Endothelial cell of umbilical vein (primary cell): ENCODE measurements at regions of chr17 and their contacts with region 1.

Region 1: DNA sequence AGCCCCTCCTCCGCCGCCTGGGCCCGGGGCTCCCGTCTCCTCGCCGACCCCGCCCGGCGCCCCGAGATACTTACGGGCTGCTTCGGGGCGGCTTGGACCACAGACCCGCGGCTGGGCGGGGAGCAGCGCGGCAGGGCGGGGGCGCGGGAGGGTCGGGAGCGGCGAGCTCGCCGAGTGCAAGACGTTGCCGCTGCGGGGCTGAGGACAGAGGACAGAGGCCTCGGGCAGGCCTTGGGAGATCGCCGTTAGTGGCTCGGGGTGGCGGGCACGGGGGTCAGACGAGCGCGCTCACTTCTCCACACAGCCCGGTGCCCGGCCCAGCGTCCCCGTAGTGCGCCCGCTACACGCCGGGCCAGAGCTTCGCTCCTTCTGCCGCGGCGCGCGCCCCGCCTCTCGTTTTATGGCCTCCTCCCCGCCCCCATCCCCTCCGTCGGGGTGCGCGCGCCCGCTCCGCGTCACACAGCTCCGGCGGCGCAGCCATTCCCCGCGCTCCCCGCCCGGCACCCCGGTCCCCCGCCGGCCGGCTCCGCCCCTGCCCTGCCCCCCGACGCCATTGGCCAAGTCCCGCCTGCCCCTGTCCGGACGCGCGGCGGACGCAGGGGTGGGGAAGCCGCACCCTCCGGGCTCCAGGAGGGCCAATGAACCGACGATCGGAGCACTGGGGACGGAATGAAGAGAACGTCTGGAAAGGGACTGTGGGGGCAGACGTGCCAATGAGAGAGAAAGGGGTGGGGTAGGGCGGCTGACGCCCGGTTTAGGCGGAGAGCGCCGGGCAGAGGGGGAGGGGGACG is at the start of gene TOB1:
- DNase-seq: peak; percentile 98
- H3K4me3 ChIP-seq: peak within 1 kb of the TSS; percentile 48 to 82 (median 63)
- H3K27ac ChIP-seq: peak within 1 kb of the TSS; percentile 38
- H3K4me1 ChIP-seq: peaks cover 11% of the 10 kb centered on the region
- H3K27me3 ChIP-seq: no peaks in the 10 kb centered on the region
- CTCF ChIP-seq: no peak
- POLR2A ChIP-seq: peak; percentile 99
- total RNA-seq, gene TOB1: 12.9 and 13.0 TPM in 2 replicates

Region 2: DNA sequence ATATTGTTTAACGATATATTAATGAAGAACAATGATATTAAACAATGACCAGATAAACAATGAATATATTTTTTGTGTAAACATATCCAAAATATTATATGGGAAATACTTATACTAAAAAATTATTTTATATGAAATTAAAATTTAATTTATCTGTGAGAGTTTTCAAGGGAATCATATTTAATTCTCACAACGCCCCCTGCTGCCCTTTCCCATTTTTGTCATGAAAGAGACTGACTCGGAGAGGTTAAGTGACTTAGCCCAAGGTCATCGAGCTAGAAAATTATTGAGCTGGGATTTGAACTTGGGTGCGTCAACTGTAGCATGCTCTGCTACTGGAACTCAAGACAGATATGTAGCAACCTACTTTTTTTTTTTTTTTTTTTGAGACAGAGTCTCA is 365.1 kb before region 1 on chr17:
- CTCF ChIA-PET with region 1: no interaction called
- POLR2A ChIA-PET with region 1: interaction called, 11 read pairs
- dilution Hi-C with region 1: no loop called
- intact Hi-C with region 1: no loop called
- DNase-seq: peak; percentile 42
- H3K4me3 ChIP-seq: no peak overlapping the region
- H3K27ac ChIP-seq: no peak overlapping the region
- H3K4me1 ChIP-seq: no peaks in the 10 kb centered on the region
- H3K27me3 ChIP-seq: peaks cover 3 to 6% of the 10 kb centered on the region in 2 experiments
- CTCF ChIP-seq: peak; percentile 28 to 29
- POLR2A ChIP-seq: no peak

Region 3: GRCh38 chr17:50817838-50818237 is 48.3 kb before region 1 on chr17:
- CTCF ChIA-PET with region 1: no interaction called
- POLR2A ChIA-PET with region 1: no interaction called
- dilution Hi-C with region 1: no loop called
- intact Hi-C with region 1: no loop called
- DNase-seq: no peak
- H3K4me3 ChIP-seq: no peak overlapping the region
- H3K27ac ChIP-seq: no peak overlapping the region
- H3K4me1 ChIP-seq: no peaks in the 10 kb centered on the region
- H3K27me3 ChIP-seq: peaks cover 1 to 5% of the 10 kb centered on the region in 2 experiments
- CTCF ChIP-seq: no peak
- POLR2A ChIP-seq: no peak

Region 4: DNA sequence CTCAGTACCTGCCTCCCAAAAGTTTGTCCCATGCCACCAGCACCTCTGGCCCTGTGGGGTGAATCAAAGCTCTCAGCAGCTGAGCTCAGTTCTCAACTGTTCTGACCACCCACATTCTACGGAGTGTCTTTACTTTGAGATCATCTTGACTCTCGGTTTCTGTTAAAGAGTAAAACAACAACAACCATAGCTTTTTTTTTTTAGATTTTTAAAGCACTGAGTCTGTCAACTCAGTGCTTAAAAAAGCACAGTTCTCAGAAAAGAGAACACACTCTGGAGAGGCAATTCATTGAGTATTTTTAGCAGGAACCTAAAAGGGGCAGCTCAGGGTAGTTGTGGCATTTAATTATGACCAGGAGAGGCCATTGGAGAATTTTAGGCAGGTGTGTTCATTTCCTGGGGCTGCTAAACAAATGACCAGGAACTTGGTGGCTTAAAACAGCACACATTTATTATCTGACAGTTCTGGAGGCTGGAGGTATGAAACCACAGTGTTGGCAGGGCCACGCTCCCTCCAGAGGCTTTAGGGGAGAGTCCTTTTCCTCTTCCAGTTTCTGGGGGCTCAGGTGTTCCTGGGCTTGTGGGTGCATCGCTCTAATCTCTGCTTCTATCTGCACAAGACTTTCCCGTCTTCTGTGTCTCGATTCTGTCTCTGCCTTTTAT is 37.5 kb before region 1 on chr17:
- CTCF ChIA-PET with region 1: no interaction called
- POLR2A ChIA-PET with region 1: no interaction called
- dilution Hi-C with region 1: no loop called
- intact Hi-C with region 1: no loop called
- DNase-seq: no peak
- H3K4me3 ChIP-seq: no peak overlapping the region
- H3K27ac ChIP-seq: no peak overlapping the region
- H3K4me1 ChIP-seq: no peaks in the 10 kb centered on the region
- H3K27me3 ChIP-seq: peaks cover 2 to 3% of the 10 kb centered on the region in 2 experiments
- CTCF ChIP-seq: no peak
- POLR2A ChIP-seq: no peak

Region 5: GRCh38 chr17:50853015-50853615 is 13.1 kb before region 1 on chr17:
- CTCF ChIA-PET with region 1: interaction called, 125 read pairs
- POLR2A ChIA-PET with region 1: interaction called, 67 read pairs
- dilution Hi-C with region 1: no loop called
- intact Hi-C with region 1: no loop called
- DNase-seq: peak; percentile 53
- H3K4me3 ChIP-seq: no peak overlapping the region
- H3K27ac ChIP-seq: no peak overlapping the region
- H3K4me1 ChIP-seq: peaks cover 10% of the 10 kb centered on the region
- H3K27me3 ChIP-seq: peaks cover 7 to 16% of the 10 kb centered on the region in 2 experiments
- CTCF ChIP-seq: no peak
- POLR2A ChIP-seq: no peak

Region 6: DNA sequence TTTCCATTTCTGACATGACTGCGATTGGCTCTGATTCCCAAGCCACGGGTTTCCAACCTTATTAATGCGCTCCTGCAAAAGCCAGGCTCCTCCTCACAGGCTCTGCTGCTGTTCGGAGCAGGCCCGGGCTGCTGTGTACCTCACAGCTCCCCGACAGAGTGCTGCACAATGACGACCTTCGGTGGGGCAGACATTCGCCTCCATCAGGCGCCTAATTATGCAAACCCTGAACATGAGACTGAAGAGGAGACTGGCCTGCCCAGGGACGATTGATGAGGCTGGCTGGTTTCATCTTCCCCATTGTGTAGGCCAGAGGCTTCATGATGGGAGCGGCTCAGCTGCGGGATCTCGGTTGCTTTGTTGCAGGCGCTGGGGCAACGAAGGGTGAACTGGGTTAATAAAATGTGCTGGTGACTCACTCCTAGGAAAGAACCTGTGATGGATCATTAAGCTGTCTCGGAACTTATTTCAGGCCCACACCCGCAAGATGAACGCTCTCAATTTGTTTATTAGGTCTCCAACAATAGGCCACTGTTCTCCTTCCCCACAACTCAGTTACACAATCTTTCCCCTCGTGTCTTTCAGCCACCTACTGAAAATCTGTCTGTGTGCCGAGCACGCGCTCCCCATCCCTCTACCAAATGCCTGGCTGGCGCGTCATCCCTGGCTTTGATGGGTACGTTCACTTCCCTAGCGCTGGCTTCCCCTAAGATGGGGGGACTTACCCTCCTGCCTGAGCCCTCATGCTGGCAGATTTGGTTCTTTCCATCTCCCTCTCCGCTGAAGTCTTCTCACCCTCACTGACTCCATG is 27.2 kb after region 1 on chr17:
- CTCF ChIA-PET with region 1: no interaction called
- POLR2A ChIA-PET with region 1: no interaction called
- dilution Hi-C with region 1: no loop called
- intact Hi-C with region 1: no loop called
- DNase-seq: no peak
- H3K4me3 ChIP-seq: no peak overlapping the region
- H3K27ac ChIP-seq: no peak overlapping the region
- H3K4me1 ChIP-seq: no peaks in the 10 kb centered on the region
- H3K27me3 ChIP-seq: peaks cover 5 to 12% of the 10 kb centered on the region in 2 experiments
- CTCF ChIP-seq: no peak
- POLR2A ChIP-seq: no peak

Region 7: GRCh38 chr17:50931144-50931908 is 65.1 kb after region 1 on chr17:
- CTCF ChIA-PET with region 1: interaction called, 3 read pairs
- POLR2A ChIA-PET with region 1: interaction called, 25 read pairs
- dilution Hi-C with region 1: no loop called
- intact Hi-C with region 1: loop called (anchors 1 kb)
- DNase-seq: peak; percentile 82
- H3K4me3 ChIP-seq: peak overlapping the region; percentile 37 to 67 (median 61)
- H3K27ac ChIP-seq: peak overlapping the region; percentile 66
- H3K4me1 ChIP-seq: peaks cover 11% of the 10 kb centered on the region
- H3K27me3 ChIP-seq: no peaks in the 10 kb centered on the region
- CTCF ChIP-seq: no peak
- POLR2A ChIP-seq: no peak

Region 8: DNA sequence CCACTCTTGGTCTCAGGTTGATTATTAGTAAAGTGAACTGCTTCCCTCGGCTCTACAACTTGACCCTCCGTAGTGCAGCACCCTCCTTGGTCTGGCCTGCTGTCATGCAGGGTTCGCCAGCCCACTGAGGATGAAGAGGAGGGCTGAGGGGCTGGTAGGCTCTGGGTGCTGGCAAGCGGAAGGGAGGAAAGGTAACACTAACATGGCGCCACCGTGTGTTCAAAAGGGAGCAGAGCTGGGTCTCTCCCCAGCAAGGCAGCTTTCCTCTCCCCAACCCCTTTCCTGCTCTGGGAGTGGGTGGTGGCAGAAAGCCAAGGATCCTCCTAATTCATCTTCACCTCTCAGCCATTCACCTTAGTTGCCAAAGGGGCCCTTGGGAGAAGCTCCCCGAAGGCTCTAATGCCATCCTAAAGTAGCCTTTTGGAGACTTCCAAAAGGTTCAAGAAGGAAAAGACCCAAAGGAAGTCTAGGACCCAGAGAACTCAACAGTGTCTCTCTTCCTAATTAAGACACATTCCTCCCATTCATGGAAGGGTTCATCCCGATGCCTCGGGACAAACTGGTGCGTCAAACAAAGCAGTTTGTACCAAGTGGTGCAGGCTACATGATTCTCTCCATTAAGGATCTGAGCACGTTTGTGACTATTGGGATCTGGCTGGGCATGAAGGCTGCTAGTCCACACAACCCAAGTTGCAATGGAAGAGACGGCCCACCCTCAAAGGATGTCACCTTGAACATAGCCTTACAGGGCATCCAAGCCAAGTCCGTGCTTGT is 90.8 kb after region 1 on chr17:
- CTCF ChIA-PET with region 1: interaction called, 149 read pairs
- POLR2A ChIA-PET with region 1: interaction called, 18 read pairs
- dilution Hi-C with region 1: no loop called
- intact Hi-C with region 1: loop called (anchors 1 kb)
- DNase-seq: peak; percentile 44
- H3K4me3 ChIP-seq: no peak overlapping the region
- H3K27ac ChIP-seq: no peak overlapping the region
- H3K4me1 ChIP-seq: peaks cover 7% of the 10 kb centered on the region
- H3K27me3 ChIP-seq: no peaks in the 10 kb centered on the region
- CTCF ChIP-seq: peak; percentile 76 to 87
- POLR2A ChIP-seq: no peak

Region 9: DNA sequence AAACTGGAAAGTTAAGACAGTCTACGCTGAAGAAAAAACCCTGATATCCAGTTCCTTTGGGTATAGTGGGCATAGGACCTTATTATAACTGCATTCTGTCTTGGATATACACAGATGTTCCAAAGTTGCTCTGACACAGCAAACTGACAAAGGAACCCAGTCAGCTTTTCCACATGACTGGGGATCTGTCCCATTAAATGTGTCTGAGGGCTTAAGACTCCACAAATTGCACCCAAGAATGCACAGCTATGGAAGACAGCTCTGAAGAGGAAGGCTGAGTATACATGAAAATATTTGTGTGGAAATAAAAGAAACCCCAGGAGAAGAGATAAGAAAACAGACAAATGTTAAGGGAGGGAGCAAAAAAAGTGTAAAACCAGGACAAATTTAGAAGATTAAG is 140.4 kb after region 1 on chr17:
- CTCF ChIA-PET with region 1: no interaction called
- POLR2A ChIA-PET with region 1: no interaction called
- dilution Hi-C with region 1: no loop called
- intact Hi-C with region 1: no loop called
- DNase-seq: peak; percentile 21
- H3K4me3 ChIP-seq: no peak overlapping the region
- H3K27ac ChIP-seq: no peak overlapping the region
- H3K4me1 ChIP-seq: peaks cover 5% of the 10 kb centered on the region
- H3K27me3 ChIP-seq: no peaks in the 10 kb centered on the region
- CTCF ChIP-seq: no peak
- POLR2A ChIP-seq: no peak

Region 10: GRCh38 chr17:51120739-51121617 is 254.8 kb after region 1 on chr17 and contains the start of gene SPAG9:
- CTCF ChIA-PET with region 1: no interaction called
- POLR2A ChIA-PET with region 1: interaction called, 10 read pairs
- dilution Hi-C with region 1: no loop called
- intact Hi-C with region 1: loop called (anchors 2 kb)
- DNase-seq: peak; percentile 97
- H3K4me3 ChIP-seq: peak within 1 kb of the TSS; percentile 96 to 99 (median 96)
- H3K27ac ChIP-seq: peak within 1 kb of the TSS; percentile 100
- H3K4me1 ChIP-seq: peaks cover 31% of the 10 kb centered on the region
- H3K27me3 ChIP-seq: no peaks in the 10 kb centered on the region
- CTCF ChIP-seq: no peak
- POLR2A ChIP-seq: no peak
- total RNA-seq, gene SPAG9: 73.5 and 75.0 TPM in 2 replicates